ENCODE measurements at regions of chr17 and their contacts with region 1.

Region 1: GRCh38 chr17:49575579-49576087 is at the start of gene NXPH3:
- DNase-seq: peak; percentile 53 to 82
- H3K4me3 ChIP-seq: peak within 1 kb of the TSS; percentile 48
- H3K4me1 ChIP-seq: peaks cover 3% of the 10 kb centered on the region; the same call in 1 of the 2 replicates
- H3K27me3 ChIP-seq: no peaks in the 10 kb centered on the region

Region 2: DNA sequence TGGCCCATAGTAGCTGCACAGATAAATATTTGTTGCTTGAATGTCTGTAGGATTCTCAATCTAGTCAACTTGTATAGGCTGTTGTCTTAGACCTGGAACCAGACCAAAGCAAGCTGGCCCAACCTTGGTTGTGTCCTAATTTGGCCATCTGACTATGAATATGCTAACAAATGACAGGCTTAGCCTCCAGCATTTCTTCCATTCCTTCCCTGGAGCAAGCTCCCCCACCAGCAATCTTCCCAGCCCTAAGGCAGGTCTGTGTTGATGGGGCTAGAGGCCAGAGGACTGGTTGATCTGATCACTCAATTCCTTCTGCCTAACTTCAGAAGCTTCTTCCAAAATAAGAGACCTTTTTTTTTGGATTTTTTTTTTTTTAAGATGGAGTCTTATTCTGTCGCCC is 335.7 kb before region 1 on chr17:
- in situ Hi-C with region 1: no loop called
- DNase-seq: no peak
- H3K4me3 ChIP-seq: no peak overlapping the region
- H3K4me1 ChIP-seq: no peaks in the 10 kb centered on the region
- H3K27me3 ChIP-seq: no peaks in the 10 kb centered on the region

Region 3: DNA sequence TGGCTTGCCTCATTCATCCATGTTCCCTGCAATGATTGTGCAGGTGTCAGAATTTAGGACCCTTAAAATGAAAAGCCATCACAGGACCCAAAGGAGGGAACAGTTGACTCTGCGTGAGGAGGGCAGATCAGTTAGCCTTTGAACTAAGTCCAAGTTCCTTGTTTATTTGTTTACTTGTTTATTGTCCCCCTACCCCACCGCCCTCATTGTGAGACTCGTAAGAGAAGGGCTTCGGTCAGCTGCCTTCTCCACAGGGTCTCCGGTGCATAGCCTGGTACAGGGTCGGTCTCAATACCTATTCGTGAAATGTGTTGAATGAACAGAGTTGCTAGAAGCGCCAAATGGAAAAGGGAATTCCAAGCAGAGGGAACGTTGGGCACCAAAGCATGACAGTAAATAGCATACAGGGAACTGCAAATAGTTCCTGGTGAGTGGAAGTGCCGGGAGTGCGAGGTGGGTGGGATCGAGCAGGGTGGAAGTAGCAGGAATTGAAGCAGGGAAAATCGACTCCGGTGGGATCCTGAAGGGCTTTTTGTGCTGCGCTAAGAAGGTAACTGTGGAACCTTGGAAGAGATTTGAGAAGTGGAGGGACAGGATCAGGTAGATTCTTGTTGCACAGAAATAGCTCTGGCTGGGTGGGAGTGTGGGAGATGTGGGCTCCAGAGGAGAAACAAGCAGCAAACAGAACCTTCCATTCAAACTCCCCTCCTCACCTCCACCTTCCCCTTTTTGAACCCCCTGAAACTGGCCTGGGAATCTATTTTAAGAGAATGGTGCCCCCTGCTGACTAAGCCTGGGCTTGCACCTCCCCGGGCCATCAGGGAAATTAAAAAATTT is 119.4 kb after region 1 on chr17:
- in situ Hi-C with region 1: loop called (anchors 5 kb)
- DNase-seq: peak in 1 of 2 experiments; percentile 76
- H3K4me3 ChIP-seq: no peak overlapping the region
- H3K4me1 ChIP-seq: no peaks in the 10 kb centered on the region
- H3K27me3 ChIP-seq: no peaks in the 10 kb centered on the region

Region 4: DNA sequence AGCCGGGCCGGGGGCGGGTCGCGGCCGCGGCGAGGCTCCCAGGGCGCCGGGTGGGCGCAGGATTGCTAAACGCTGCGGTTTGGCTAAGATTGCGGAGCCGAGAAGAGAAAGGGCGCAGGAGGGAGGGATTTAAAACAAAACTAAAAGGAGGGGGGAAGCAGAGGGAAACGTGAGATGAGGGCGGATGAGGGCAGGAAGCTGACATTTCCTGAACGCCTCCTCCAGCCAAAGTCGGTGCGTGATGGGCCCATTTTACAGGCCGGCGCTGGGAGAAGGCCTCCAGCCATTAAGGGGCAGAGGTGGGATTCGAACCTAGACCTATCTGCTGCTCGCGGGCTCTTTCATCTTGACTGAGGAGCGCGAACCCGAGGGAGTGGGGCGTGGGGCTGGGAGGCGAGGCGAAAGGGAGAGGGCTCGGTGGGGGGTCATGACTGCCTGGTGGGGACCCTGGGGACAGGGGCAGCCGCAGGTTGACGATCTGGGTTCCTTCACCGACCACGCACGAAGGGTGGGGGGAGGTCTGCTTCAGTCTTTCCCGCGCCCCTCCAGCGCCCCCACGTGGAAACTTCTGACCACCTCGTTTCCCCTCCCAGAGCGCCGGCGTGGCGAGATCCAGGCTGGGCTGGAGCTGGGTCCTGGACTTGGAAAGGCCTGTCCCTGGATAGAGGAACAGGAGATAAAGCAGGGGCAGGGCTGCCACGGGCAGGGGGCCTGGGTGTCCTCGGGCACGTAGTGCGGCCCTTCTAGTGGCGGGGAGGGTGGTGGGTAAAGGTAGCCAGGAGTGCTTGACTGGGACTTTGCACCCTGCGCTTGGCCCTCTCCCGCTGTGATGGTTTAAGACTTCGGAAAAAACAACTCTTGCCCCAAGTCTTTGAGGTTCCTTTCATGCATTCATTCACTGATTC is 276.0 kb after region 1 on chr17:
- in situ Hi-C with region 1: loop called (anchors 5 kb)
- DNase-seq: peak; percentile 74 to 94
- H3K4me3 ChIP-seq: peak overlapping the region; percentile 33
- H3K4me1 ChIP-seq: peaks cover 3% of the 10 kb centered on the region; the same call in 1 of the 2 replicates
- H3K27me3 ChIP-seq: no peaks in the 10 kb centered on the region

Region 5: GRCh38 chr17:49997791-49998703 is 422.4 kb after region 1 on chr17:
- in situ Hi-C with region 1: loop called (anchors 10 kb)
- DNase-seq: peak; percentile 76 to 93
- H3K4me3 ChIP-seq: no peak overlapping the region
- H3K4me1 ChIP-seq: peaks cover 10% of the 10 kb centered on the region
- H3K27me3 ChIP-seq: peaks cover 22% of the 10 kb centered on the region